ENCODE measurements at regions of chr4 and their contacts with region 1.

Region 1: GRCh38 chr4:6909073-6909965 is at the start of gene TBC1D14:
- DNase-seq: peak; percentile 83
- H3K4me3 Mint-ChIP-seq: peak within 1 kb of the TSS; percentile 94
- H3K27ac Mint-ChIP-seq: peak within 1 kb of the TSS; percentile 75
- H3K4me1 Mint-ChIP-seq: peaks cover 17% of the 10 kb centered on the region
- H3K27me3 Mint-ChIP-seq: no peaks in the 10 kb centered on the region
- CTCF ChIP-seq: no peak
- total RNA-seq, gene TBC1D14: 26.1 and 26.4 TPM in 2 replicates

Region 2: DNA sequence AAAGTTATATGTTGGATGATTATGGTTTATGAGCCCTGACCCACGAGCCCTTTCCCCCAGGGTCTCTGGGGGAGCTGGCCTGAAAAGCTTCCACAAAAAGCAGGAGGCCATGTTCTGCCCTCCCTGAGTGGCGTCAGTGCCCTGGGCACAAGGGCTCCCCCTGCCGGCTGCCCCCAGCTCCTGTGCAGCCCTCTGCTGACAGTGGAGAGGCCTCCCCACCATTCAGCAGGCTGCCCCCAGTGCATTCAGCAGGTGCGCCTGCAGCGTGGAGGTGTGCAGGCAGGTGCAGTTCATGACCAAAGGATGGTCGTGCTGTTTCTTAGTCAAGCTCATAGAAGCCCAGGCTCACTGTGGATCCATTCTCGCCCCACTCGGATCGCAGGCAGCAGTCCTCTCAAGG is 228.1 kb before region 1 on chr4:
- CTCF ChIA-PET with region 1: no interaction called
- intact Hi-C with region 1: no loop called
- DNase-seq: peak; percentile 52
- H3K4me3 Mint-ChIP-seq: no peak overlapping the region
- H3K27ac Mint-ChIP-seq: no peak overlapping the region
- H3K4me1 Mint-ChIP-seq: peaks cover 9% of the 10 kb centered on the region
- H3K27me3 Mint-ChIP-seq: no peaks in the 10 kb centered on the region
- CTCF ChIP-seq: peak; percentile 38

Region 3: GRCh38 chr4:6986781-6987587 is 77.7 kb after region 1 on chr4:
- CTCF ChIA-PET with region 1: interaction called, 4 read pairs
- intact Hi-C with region 1: loop called (anchors 5 kb)
- DNase-seq: peak; percentile 92
- H3K4me3 Mint-ChIP-seq: peak overlapping the region; percentile 96
- H3K27ac Mint-ChIP-seq: peak overlapping the region; percentile 90
- H3K4me1 Mint-ChIP-seq: peaks cover 32% of the 10 kb centered on the region
- H3K27me3 Mint-ChIP-seq: no peaks in the 10 kb centered on the region
- CTCF ChIP-seq: no peak

Region 4: DNA sequence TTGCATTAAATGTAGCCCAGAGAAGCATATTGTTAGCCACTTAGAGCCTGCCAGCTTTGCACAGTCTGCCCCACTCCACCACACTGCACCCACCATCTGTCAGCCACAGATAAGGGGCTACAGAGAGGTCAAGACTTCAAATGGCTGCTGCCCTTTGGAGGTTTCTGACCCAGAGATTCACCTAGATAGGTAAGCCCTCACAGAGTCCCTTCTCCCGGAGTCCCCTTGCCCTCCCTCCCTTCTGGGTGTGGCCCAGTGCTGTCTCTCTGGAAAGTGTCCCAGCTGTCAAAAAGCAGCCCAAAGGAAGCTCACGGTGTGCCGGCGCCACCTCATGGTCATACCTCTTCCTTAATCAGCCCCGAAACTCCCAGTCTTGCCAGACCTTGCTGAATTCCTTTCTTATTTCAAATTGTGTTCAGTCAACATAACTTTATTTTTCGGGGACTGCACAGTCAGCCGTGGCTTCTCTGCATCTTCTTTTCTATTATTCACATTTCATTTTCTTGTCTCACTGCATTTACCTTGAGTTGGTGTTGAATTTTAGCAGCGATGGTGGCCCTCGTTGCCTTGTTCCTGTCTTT is 172.7 kb after region 1 on chr4:
- CTCF ChIA-PET with region 1: interaction called, 4 read pairs
- intact Hi-C with region 1: loop called (anchors 5 kb)
- DNase-seq: peak; percentile 67
- H3K4me3 Mint-ChIP-seq: no peak overlapping the region
- H3K27ac Mint-ChIP-seq: no peak overlapping the region
- H3K4me1 Mint-ChIP-seq: no peaks in the 10 kb centered on the region
- H3K27me3 Mint-ChIP-seq: peaks cover 13% of the 10 kb centered on the region
- CTCF ChIP-seq: peak; percentile 18